AG04450 (cell line): ENCODE measurements at regions of chr7 and their contacts with region 1.

Region 1: GRCh38 chr7:151315038-151315655 is 26.5 kb upstream of the NUB1 start:
- DNase-seq: peak; percentile 30
- H3K4me3 ChIP-seq: no peak overlapping the region
- H3K27ac ChIP-seq: no peak overlapping the region
- H3K27me3 ChIP-seq: peaks cover 12% of the 10 kb centered on the region
- CTCF ChIP-seq: peak; percentile 81

Region 2: DNA sequence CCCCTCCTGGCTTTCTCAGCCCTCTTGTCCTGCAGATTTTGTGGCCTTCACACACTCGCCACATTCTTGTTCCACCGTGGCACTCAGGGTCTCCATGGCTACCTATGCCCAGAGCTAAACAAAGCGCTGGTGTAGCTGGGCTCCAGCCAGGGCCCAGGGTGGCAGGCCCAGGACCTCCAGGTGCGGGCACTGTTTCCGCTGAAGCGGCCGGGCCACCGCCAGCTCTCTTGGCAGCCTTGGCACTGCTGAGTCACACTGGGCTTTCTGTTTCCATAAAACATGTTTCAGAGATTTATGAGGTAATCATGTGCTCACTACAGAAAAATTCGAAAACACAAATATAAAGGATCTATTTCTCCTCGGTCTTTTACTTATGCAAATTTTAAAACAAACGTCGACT is 411.5 kb before region 1 on chr7:
- CTCF ChIA-PET with region 1: no interaction called
- POLR2A ChIA-PET with region 1: no interaction called
- DNase-seq: peak; percentile 41
- H3K4me3 ChIP-seq: no peak overlapping the region
- H3K27ac ChIP-seq: peak overlapping the region; percentile 52
- H3K27me3 ChIP-seq: no peaks in the 10 kb centered on the region
- CTCF ChIP-seq: no peak

Region 3: DNA sequence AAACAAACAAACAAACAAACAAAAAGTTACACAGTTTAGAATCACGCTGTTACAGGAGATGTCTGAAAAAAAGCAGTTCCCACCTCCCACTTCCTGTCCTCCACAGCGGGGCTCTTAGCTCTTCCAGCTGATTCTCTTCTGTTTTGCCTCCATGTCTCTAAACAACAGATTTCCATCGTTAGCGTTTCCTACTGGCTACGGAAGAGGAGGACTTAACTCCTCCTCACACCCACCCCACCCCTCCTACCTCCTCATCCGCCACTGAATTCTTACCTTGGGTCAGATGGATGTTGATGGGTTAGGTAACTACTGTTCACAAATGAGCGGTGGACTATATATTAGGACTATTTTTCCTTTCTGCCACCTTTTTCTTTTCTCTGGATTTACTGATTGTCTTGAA is 10.3 kb before region 1 on chr7:
- CTCF ChIA-PET with region 1: interaction called, 14 read pairs
- POLR2A ChIA-PET with region 1: no interaction called
- DNase-seq: no peak
- H3K4me3 ChIP-seq: peak overlapping the region; percentile 27; the same call in 1 of the 2 replicates
- H3K27ac ChIP-seq: no peak overlapping the region
- H3K27me3 ChIP-seq: peaks cover 16% of the 10 kb centered on the region
- CTCF ChIP-seq: no peak

Region 4: DNA sequence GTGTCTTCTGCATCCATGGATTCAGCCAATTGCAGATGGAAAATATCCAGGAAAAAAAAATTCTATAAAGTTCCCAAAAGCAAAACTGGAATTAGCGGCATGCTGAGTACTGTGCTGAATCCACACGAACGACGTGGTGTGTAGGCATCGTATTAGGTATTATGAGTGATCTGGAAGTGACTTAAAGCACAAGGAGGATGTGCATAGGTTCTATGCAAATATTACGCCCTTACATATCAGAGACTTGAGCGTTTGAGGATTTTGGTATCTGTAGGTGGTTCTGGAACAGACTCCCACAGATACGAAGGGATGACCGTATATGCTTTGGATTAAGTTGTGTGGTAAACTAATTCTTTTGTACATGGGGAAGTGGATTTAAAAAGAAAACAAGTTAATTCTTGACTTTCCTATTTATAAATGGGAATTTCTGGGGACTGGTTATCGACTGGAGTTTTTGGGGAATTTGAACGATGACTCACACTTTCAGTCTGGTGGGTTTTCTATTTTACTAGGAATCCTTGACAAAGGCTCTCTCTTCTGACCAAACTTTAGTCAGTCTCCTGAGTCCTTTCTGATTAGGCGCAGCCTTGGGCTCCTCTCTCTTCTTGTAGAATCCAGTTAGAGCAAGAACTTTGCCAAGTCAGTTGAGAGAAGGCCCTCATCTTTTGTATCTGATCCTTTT is 21.0 kb after region 1 on chr7:
- CTCF ChIA-PET with region 1: interaction called, 29 read pairs
- POLR2A ChIA-PET with region 1: interaction called, 7 read pairs
- DNase-seq: no peak
- H3K4me3 ChIP-seq: no peak overlapping the region
- H3K27ac ChIP-seq: no peak overlapping the region
- H3K27me3 ChIP-seq: peaks cover 13% of the 10 kb centered on the region
- CTCF ChIP-seq: no peak

Region 5: DNA sequence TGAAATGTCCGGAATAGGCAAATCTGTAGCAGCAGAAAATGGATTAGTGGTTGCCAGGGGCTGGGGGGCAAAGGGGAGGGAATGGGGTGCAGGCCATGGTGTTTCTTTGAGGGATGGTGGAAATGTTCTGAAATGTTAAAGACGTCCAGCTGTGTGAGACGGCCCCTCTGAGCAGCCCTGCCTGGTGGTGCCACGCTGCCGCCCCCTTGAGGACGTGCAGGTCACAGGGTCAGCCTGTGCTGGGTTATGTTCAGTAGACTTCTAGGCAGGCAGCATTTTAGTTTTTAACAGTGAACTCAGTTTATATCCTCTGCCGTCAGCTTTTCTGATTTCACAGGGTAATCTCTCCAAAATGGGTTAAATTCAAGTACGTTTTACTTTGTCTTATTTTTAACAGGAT is 35.9 kb after region 1 on chr7:
- CTCF ChIA-PET with region 1: interaction called, 160 read pairs
- POLR2A ChIA-PET with region 1: interaction called, 7 read pairs
- DNase-seq: no peak
- H3K4me3 ChIP-seq: no peak overlapping the region
- H3K27ac ChIP-seq: no peak overlapping the region
- H3K27me3 ChIP-seq: no peaks in the 10 kb centered on the region
- CTCF ChIP-seq: no peak; the same call in 1 of the 2 replicates

Region 6: GRCh38 chr7:151448261-151449252 is 133.4 kb after region 1 on chr7:
- CTCF ChIA-PET with region 1: interaction called, 56 read pairs
- POLR2A ChIA-PET with region 1: no interaction called
- DNase-seq: no peak
- H3K4me3 ChIP-seq: peak overlapping the region; percentile 51
- H3K27ac ChIP-seq: no peak overlapping the region
- H3K27me3 ChIP-seq: peaks cover 4% of the 10 kb centered on the region
- CTCF ChIP-seq: peak; percentile 77